ENCODE measurements at regions of chr14 and their contacts with region 1.

Region 1: GRCh38 chr14:93132470-93133065 is 16.8 kb upstream of the ITPK1 start:
- DNase-seq: peak; percentile 63
- H3K4me3 ChIP-seq: no peak overlapping the region
- H3K27ac ChIP-seq: no peak overlapping the region
- H3K4me1 ChIP-seq: no peaks in the 10 kb centered on the region; a peak in 1 of 4 replicates
- H3K27me3 ChIP-seq: no peaks in the 10 kb centered on the region
- CTCF ChIP-seq: peak; percentile 54
- EP300 ChIP-seq: no peak
- RAD21 ChIP-seq: peak; percentile 54

Region 2: GRCh38 chr14:93142854-93143652 is 10.5 kb after region 1 on chr14:
- CTCF ChIA-PET with region 1: interaction called, 10 read pairs
- POLR2A ChIA-PET with region 1: no interaction called
- DNase-seq: no peak
- H3K4me3 ChIP-seq: no peak overlapping the region
- H3K27ac ChIP-seq: no peak overlapping the region
- H3K4me1 ChIP-seq: no peaks in the 10 kb centered on the region; a peak in 1 of 4 replicates
- H3K27me3 ChIP-seq: no peaks in the 10 kb centered on the region
- CTCF ChIP-seq: no peak
- EP300 ChIP-seq: no peak
- RAD21 ChIP-seq: no peak

Region 3: DNA sequence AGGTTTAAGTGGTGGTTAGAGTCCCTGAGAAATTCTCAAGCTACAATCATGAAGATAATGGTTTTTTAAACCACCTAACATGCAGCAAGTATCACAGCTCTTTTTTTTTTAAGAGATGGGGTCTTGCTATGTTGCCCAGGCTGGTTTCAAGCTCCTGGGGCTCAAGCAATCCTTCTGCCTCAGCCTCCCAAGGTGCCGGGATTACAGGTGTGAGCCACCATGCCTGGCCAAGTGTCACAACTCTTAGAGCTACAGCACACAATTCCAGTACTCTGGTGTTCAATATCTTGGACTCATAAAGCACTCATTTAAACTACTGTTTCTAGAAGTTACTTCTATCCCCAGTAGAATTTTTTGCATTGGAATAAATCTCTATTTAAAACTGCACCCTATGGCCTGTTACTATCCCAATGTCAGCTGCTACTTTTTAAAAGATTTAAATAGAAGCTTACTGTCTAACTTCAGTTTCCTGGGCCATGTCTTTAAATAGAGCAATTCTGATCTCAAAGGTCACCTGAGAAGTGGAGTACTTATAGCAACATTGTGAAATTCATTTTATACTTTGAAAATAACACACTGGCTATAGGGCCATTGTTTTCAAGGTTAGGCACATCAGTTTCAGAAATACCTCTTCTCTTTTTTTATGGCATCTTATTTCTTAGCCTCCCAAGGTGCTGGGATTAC is 62.9 kb after region 1 on chr14:
- CTCF ChIA-PET with region 1: no interaction called
- POLR2A ChIA-PET with region 1: no interaction called
- DNase-seq: no peak
- H3K4me3 ChIP-seq: no peak overlapping the region
- H3K27ac ChIP-seq: no peak overlapping the region
- H3K4me1 ChIP-seq: no peaks in the 10 kb centered on the region
- H3K27me3 ChIP-seq: no peaks in the 10 kb centered on the region
- CTCF ChIP-seq: no peak
- EP300 ChIP-seq: no peak
- RAD21 ChIP-seq: no peak